ENCODE measurements at regions of chr5 and their contacts with region 1.

Region 1: GRCh38 chr5:179768326-179769085 is 25.3 kb upstream of the LTC4S start:
- DNase-seq: no peak
- ATAC-seq: 0 out of 6 replicates have a peak, but pooled peaks of 1 of the 2 experiments have one; percentile 30
- H3K4me3 ChIP-seq: no peak overlapping the region
- H3K27ac ChIP-seq: no peak overlapping the region
- H3K4me1 ChIP-seq: peaks cover 25% of the 10 kb centered on the region
- CTCF ChIP-seq: 0 out of 3 replicates have a peak, but pooled peaks have one; percentile 9
- EP300 ChIP-seq: no peak
- POLR2A ChIP-seq: no peak
- RAD21 ChIP-seq: no peak

Region 2: DNA sequence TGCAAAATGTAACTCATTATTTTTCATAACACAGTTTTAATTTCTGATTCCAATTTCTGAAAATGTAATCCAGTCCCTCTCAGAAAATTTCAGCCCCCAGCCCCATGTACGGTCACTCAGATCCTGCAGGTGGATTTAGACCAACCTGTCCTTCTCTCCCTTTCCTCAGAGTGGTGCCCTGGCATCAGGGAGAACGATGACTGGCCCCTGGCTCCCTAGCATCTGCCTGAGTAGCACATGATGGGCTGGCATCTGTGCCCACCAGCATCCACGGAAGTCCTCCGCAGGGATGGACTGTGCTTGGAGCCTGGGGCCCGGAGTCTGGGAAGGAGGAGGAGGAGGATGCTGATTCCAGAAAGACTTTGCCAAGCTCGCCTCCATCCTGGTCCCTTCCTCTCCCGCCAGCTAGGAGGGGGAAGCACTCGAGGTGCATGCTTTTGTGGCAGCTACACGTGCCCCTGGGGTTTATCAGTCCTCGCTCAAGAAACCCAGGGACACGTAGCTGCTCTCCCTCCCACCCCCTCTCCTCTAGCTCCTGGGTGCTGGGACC is 272.5 kb before region 1 on chr5:
- CTCF ChIA-PET with region 1: no interaction called
- POLR2A ChIA-PET with region 1: no interaction called
- DNase-seq: peak in 1 of 2 experiments; percentile 21
- ATAC-seq: peak; percentile 73 to 77; a peak in 4 of 6 replicates
- H3K4me3 ChIP-seq: no peak overlapping the region
- H3K27ac ChIP-seq: no peak overlapping the region
- H3K4me1 ChIP-seq: no peaks in the 10 kb centered on the region
- CTCF ChIP-seq: peak; percentile 13; the same call in 2 of the 3 replicates
- EP300 ChIP-seq: no peak
- POLR2A ChIP-seq: no peak
- RAD21 ChIP-seq: peak; percentile 37 to 56; a peak in 3 of 5 replicates

Region 3: DNA sequence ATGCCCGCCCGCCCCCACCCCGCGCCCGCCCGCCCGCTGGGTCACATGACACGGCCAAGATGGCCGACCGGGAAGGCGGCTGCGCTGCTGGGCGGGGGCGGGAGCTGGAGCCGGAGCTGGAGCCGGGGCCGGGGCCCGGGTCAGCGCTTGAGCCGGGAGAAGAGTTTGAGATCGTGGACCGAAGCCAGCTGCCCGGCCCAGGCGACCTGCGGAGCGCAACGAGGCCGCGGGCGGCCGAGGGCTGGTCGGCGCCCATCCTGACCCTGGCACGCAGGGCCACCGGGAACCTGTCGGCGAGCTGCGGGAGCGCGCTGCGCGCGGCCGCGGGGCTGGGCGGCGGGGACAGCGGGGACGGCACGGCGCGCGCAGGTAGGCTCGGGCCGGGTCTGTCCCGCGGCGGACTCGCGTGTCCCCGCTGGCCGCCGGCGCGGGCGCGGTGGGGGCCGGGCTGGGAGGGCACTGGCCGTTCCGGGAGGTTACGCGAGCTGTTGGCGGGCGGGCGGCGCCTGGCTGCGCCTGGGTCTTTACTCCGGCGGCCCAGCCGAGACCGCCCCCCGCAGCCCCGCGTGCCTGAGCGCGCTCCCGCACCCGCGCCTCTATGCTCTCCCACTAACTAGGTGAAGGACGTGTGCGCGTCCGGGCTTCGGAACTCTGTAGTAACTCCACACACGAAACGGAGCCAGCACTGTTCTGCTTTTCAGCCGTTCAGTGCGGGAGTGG is 217.8 kb before region 1 on chr5 and contains the start of gene RUFY1:
- CTCF ChIA-PET with region 1: no interaction called
- POLR2A ChIA-PET with region 1: no interaction called
- DNase-seq: peak; percentile 81 to 82
- ATAC-seq: peak; percentile 83 to 84
- H3K4me3 ChIP-seq: peak within 1 kb of the TSS; percentile 63
- H3K27ac ChIP-seq: peak within 1 kb of the TSS; percentile 91 to 99
- H3K4me1 ChIP-seq: peaks cover 24% of the 10 kb centered on the region
- CTCF ChIP-seq: no peak
- EP300 ChIP-seq: no peak
- POLR2A ChIP-seq: peak; percentile 48
- RAD21 ChIP-seq: no peak
- polyA plus RNA-seq, gene RUFY1: 30.6 and 39.5 TPM in 2 replicates

Region 4: DNA sequence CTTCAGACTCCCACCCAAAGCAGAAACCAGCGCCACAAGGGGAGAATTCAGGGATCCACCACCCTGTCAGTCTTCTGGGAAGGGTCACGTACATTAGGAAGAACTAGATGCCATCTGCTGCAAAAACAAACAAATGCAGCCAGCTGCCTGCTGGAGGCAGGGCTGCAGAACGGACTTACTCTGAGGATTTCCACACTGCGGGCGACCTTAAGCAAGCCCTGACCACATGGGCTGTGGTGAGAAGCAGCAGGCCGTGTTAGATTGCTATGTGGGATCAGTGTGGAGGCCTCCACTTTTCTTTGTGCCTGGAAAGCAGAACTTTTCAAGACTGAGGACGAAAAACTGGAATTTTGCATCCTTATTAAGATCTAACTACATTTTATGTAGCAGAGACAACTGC is 11.9 kb after region 1 on chr5:
- CTCF ChIA-PET with region 1: interaction called, 38 read pairs
- POLR2A ChIA-PET with region 1: no interaction called
- DNase-seq: no peak
- ATAC-seq: no peak
- H3K4me3 ChIP-seq: no peak overlapping the region
- H3K27ac ChIP-seq: no peak overlapping the region
- H3K4me1 ChIP-seq: no peaks in the 10 kb centered on the region
- CTCF ChIP-seq: no peak
- EP300 ChIP-seq: no peak
- POLR2A ChIP-seq: no peak
- RAD21 ChIP-seq: no peak

Measured in A549 (cell line).